Prostate gland (tissue), 2 donors: ENCODE measurements at regions of chr22 and their contacts with region 1.

Region 1: DNA sequence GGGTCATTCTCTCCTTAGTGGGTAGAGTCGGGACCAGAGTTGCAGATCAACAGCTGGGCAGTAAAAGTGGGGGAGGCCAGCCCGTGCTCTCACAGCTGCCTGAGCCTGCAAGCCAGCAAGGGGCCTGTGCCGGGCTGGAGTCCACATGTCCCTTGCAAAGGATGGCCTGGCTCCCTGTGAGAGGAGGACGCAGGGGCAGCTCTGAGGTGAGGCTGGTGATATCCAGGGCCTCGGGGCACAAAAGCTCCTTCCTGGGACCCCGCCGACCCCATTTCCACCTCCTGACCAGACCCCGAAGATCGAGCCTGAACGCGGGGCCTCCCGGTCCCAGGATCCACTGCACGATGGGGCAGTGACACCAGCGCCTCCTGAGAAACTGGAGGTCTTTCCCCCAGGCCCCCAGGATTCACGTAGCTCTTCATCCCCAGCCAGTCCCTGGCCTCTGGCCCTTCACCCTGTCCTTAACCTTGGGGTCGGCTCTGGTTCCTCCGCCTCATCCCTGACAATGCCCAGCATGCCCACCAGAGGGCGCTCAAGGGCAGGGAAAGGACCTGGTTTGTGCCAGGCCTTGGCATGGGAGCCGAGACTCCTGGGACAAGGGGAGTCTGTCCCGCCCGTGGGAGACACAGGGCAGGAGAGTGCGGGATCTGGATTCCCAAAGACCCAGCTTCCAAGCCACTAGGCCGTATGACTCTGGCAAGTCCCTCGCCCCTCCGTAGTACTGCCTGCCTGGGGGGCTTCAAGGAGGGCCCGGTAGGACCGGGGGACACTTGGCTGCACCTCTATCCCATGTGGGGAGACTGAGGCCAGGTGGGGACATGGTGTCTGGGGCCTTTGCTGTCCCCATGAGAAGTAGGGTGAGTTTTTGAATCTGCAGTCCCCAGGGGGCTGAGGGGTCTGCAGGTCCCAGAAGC is 17.8 kb upstream of the WNT7B start:
- DNase-seq: peak; percentile 65
- H3K4me3 ChIP-seq: no peak overlapping the region
- H3K27ac ChIP-seq: no peak overlapping the region
- H3K4me1 ChIP-seq: peaks cover 8% of the 10 kb centered on the region
- H3K27me3 ChIP-seq: no peaks in the 10 kb centered on the region
- CTCF ChIP-seq: peak; percentile 97 to 98 (median 98)
- POLR2A ChIP-seq: no peak

Region 2: DNA sequence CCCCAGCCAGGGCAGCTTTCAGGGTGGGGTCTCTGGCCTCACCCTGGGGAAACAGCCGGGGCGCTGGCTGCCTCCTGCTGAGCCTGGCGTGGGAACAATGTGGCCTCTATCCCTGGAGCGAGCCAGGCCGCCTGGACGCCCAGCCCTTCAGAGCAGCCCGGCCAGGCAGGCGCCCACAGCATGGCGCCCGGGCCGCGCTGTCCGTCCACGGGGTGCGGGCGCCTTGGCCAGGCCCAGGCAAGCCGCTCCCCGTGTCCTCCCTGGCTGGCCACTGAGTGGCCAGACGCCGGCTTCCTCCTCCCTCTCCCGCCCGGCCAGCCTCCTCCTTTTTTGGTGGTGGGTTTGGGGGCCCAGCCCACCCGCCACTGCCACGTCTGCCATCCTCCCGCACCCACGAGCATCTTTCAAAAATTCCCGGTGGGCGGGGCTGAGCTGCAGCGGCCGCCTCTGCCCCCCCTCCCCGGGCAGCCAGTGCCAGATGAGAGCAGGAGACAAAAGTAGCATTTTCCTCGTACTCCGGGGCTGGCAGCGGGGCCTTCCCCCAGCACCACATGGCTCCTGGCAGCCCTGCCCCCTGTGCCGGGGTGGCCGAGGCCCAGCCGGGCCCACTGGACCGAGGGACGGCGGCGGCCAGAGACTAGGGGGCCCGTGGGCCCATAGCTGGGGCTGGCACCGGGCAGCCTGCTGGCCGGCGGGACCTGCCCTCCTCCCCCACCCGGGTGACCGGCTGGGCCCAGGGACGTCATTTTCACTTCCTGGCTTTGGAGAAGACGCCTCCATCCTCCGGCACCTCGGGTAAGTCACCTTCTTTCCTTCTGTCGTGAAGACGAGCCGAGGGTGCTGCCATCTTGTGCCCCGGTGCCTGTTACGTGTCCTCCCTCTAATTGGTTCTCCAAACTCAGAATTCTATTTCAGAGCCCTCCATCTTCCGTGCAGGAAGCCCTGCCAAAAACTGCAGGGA is 85.4 kb after region 1 on chr22:
- intact Hi-C with region 1: no loop called
- DNase-seq: peak; percentile 79
- H3K4me3 ChIP-seq: peak overlapping the region; percentile 30 to 93
- H3K27ac ChIP-seq: peak overlapping the region; percentile 96 to 99
- H3K4me1 ChIP-seq: peaks cover 33% of the 10 kb centered on the region
- H3K27me3 ChIP-seq: no peaks in the 10 kb centered on the region
- CTCF ChIP-seq: peak in 1 of 4 experiments; percentile 15
- POLR2A ChIP-seq: peak; percentile 54

Region 3: GRCh38 chr22:46116491-46116958 is 121.8 kb after region 1 on chr22:
- intact Hi-C with region 1: loop called (anchors 2 kb)
- DNase-seq: peak; percentile 94
- H3K4me3 ChIP-seq: no peak overlapping the region
- H3K27ac ChIP-seq: peak overlapping the region; percentile 78 to 89
- H3K4me1 ChIP-seq: peaks cover 11% of the 10 kb centered on the region
- H3K27me3 ChIP-seq: no peaks in the 10 kb centered on the region
- CTCF ChIP-seq: peak; percentile 80 to 98 (median 94)
- POLR2A ChIP-seq: no peak

Region 4: GRCh38 chr22:46245511-46245910 is 250.8 kb after region 1 on chr22:
- intact Hi-C with region 1: no loop called
- DNase-seq: no peak
- H3K4me3 ChIP-seq: no peak overlapping the region
- H3K27ac ChIP-seq: no peak overlapping the region
- H3K4me1 ChIP-seq: no peaks in the 10 kb centered on the region
- H3K27me3 ChIP-seq: no peaks in the 10 kb centered on the region
- CTCF ChIP-seq: no peak
- POLR2A ChIP-seq: no peak

Region 5: GRCh38 chr22:46309526-46310085 is 314.9 kb after region 1 on chr22:
- intact Hi-C with region 1: loop called (anchors 5 kb)
- DNase-seq: no peak
- H3K4me3 ChIP-seq: no peak overlapping the region
- H3K27ac ChIP-seq: no peak overlapping the region
- H3K4me1 ChIP-seq: no peaks in the 10 kb centered on the region
- H3K27me3 ChIP-seq: no peaks in the 10 kb centered on the region
- CTCF ChIP-seq: no peak
- POLR2A ChIP-seq: no peak

Region 6: DNA sequence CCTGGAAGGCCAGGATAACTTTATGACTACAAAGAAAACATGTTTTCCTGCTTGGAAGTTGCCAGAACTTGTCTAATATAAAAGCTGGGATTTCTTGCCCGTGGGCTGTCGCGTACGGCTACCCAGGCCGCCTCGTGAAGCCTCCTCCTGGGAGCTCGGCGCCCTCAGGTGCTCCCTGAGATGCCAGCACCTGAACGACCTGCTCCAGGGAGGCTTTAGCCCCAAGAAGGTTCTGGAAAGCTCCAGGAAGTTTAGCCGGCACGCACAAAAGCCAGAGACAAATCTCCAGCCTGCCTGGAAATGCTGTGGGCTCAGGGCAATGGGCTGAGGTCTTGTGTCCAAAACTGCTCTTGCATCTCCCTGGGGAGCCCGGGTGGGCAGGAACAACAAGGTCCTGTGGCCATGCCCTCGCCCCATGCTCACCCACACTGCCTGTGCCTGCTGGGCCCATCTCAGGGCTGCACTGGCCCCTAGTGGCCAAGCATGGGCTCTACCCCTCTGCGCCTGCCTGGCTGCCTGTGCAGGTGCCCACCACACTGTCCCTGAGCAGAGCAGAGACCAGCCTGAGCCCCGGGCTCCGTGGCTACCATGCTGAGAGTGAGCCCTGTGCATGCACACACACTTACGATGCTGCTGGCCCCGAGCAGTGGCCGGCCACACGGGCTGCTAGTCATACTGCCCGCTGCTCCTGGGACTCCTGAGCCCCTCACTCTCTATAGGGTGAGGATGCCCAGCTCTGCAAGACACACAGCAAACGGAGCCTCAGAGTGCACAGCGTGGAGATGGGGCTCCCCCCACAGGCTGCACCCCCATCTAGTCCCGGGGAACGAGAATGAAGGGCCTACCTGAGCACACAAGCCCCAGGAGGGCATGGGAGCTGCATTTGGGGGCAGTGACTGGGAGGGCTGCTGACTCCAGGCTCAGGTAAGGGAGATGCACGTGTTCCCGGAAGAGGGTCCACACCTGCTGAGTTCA is 547.5 kb after region 1 on chr22:
- intact Hi-C with region 1: loop called (anchors 10 kb)
- DNase-seq: peak; percentile 70
- H3K4me3 ChIP-seq: no peak overlapping the region
- H3K27ac ChIP-seq: peak overlapping the region; percentile 63 to 85
- H3K4me1 ChIP-seq: peaks cover 21% of the 10 kb centered on the region
- H3K27me3 ChIP-seq: no peaks in the 10 kb centered on the region
- CTCF ChIP-seq: peak; percentile 83 to 97 (median 96)
- POLR2A ChIP-seq: no peak